ENCODE measurements at regions of chr1 and their contacts with region 1.

Region 1: DNA sequence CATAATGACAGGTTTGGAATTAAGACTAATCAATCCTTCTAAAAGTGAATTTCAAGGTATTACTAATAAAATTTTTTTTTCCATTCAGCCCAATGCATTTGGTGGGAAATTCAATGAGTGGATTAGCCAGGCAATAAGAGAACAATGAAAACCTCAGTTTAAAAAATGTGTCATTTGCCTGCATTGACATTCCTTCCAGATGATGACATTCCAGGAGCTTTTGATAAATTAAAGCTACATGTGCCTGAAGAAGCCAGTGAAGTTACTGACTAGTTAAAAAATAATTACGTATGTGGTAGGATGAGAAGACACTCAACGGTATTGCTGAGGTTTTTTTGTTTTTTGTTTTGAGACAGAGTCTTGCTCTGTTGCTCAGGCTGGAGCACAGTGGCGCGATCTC is 37.9 kb upstream of the RC3H1 start:
- DNase-seq: no peak
- ATAC-seq: no peak
- H3K4me3 ChIP-seq: no peak overlapping the region
- H3K4me3 Mint-ChIP-seq: no peak overlapping the region
- H3K27ac ChIP-seq: no peak overlapping the region
- H3K27ac Mint-ChIP-seq: no peak overlapping the region
- H3K4me1 ChIP-seq: no peaks in the 10 kb centered on the region
- H3K4me1 Mint-ChIP-seq: peaks cover 2 to 12% (median 5%) of the 10 kb centered on the region in 3 donors
- H3K27me3 ChIP-seq: peaks cover 0 to 5% of the 10 kb centered on the region in 2 experiments
- H3K27me3 Mint-ChIP-seq: peaks cover 2 to 7% of the 10 kb centered on the region in 2 donors

Region 2: DNA sequence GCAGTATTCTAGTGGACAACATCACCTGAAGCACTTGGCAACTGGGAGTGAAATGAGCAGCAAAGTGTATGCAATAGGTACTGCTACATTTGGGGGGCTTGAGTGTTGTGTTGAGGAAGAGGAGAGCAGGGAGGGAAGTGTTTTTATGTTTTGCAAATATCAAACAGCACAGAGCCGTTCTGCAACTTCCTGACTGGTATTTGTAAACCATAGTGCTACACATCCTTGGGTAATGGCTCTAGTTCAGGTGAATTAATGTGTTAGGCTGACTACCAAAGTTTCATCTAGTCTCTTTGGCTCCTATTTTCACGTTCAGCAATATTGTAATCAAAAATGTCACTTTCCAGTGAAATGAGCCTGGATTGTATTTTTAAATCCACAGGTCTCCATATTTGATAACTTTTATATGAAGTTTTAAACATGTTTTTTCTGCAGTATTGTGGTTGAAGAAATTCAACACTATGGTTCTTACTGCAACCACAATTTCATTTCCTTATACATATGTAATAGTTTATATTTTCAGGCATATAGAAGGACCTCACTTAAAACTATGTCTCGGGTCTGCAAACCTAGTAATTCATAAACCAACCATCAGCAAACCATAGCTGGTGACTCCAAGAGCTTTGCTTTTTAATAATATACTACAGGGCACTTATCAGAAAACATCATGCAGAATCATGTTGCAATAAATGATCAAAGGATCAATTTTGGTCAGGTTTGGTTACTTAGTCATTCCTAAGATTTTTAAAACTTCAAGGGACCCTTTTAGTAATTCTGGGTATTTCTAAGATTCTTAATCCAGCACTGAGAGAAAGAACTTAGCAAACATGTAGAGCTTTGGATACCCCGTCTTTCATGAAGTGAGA is 173.1 kb before region 1 on chr1:
- CTCF ChIA-PET with region 1: no interaction called
- POLR2A ChIA-PET with region 1: no interaction called
- DNase-seq: peak in 1 of 35 experiments; percentile 7
- ATAC-seq: peak in 2 of 4 experiments; percentile 32 to 38
- H3K4me3 ChIP-seq: no peak overlapping the region
- H3K4me3 Mint-ChIP-seq: no peak overlapping the region
- H3K27ac ChIP-seq: peak overlapping the region; percentile 5
- H3K27ac Mint-ChIP-seq: peak overlapping the region; percentile 29 to 48
- H3K4me1 ChIP-seq: peaks cover 9 to 13% of the 10 kb centered on the region in 2 experiments
- H3K4me1 Mint-ChIP-seq: peaks cover 30 to 44% (median 42%) of the 10 kb centered on the region in 3 donors
- H3K27me3 ChIP-seq: no peaks in the 10 kb centered on the region
- H3K27me3 Mint-ChIP-seq: no peaks in the 10 kb centered on the region

Region 3: GRCh38 chr1:174074757-174075156 is 14.7 kb after region 1 on chr1:
- CTCF ChIA-PET with region 1: no interaction called
- POLR2A ChIA-PET with region 1: no interaction called
- DNase-seq: peak in 1 of 35 experiments; percentile 16
- ATAC-seq: no peak
- H3K4me3 ChIP-seq: no peak overlapping the region
- H3K4me3 Mint-ChIP-seq: no peak overlapping the region
- H3K27ac ChIP-seq: no peak overlapping the region
- H3K27ac Mint-ChIP-seq: no peak overlapping the region
- H3K4me1 ChIP-seq: no peaks in the 10 kb centered on the region
- H3K4me1 Mint-ChIP-seq: no peaks in the 10 kb centered on the region
- H3K27me3 ChIP-seq: no peaks in the 10 kb centered on the region
- H3K27me3 Mint-ChIP-seq: peaks cover 3 to 5% of the 10 kb centered on the region in 2 donors

Region 4: DNA sequence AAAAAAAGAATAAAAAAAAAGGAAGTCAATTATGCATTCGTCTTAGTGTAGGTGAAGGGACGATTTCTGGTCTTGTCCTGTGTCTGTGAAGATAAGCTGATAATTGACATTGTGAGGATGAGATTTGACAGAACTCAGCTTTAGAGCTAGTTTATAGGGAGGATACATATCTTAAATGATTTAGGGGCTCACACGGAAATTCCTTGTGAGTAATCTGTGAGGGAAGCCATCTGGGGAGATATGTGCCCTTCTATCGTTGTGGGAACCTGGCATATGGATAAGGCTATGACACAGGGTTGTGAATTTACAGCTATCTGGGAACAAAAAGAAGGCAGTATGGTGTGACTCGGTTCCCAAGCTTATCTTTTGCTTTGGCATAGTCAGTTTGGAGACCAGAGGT is 170.3 kb after region 1 on chr1:
- CTCF ChIA-PET with region 1: no interaction called
- POLR2A ChIA-PET with region 1: no interaction called
- DNase-seq: no peak
- ATAC-seq: no peak
- H3K4me3 ChIP-seq: no peak overlapping the region
- H3K4me3 Mint-ChIP-seq: no peak overlapping the region
- H3K27ac ChIP-seq: no peak overlapping the region
- H3K27ac Mint-ChIP-seq: no peak overlapping the region
- H3K4me1 ChIP-seq: no peaks in the 10 kb centered on the region
- H3K4me1 Mint-ChIP-seq: peaks cover 0 to 8% (median 8%) of the 10 kb centered on the region in 3 donors
- H3K27me3 ChIP-seq: no peaks in the 10 kb centered on the region
- H3K27me3 Mint-ChIP-seq: no peaks in the 10 kb centered on the region

Region 5: GRCh38 chr1:174376030-174376429 is 315.9 kb after region 1 on chr1:
- CTCF ChIA-PET with region 1: no interaction called
- POLR2A ChIA-PET with region 1: no interaction called
- DNase-seq: no peak
- ATAC-seq: no peak
- H3K4me3 ChIP-seq: no peak overlapping the region
- H3K4me3 Mint-ChIP-seq: no peak overlapping the region
- H3K27ac ChIP-seq: no peak overlapping the region
- H3K27ac Mint-ChIP-seq: no peak overlapping the region
- H3K4me1 ChIP-seq: no peaks in the 10 kb centered on the region
- H3K4me1 Mint-ChIP-seq: peaks cover 0 to 7% (median 0%) of the 10 kb centered on the region in 3 donors
- H3K27me3 ChIP-seq: no peaks in the 10 kb centered on the region
- H3K27me3 Mint-ChIP-seq: no peaks in the 10 kb centered on the region

Region 6: DNA sequence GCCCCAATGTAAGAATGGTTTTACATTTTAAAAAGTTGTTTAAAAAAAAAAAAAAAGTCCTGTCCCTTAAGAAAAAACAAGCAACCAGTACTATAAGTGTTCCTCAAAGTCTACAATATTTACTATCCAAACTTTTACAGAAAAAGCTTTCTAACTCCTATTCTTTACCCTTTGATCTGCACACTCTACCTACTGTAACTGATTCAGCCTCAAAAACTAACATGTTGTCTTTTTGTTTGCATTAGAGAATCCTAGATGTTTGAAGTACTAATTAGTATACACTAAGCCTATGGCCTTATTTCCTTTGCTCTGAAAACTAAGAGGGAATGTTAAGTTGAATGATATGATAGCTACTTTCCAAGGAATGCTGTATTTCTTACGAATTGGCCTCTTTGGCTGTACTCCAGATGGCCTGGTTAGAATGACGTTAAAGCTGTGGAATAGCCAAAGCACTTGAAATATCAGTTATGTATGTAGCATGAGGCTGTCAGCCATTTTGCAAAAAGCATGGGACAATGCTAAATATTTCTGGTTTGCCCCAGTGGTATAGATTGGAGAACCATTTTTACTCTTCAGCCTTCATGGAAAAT is 622.4 kb after region 1 on chr1:
- CTCF ChIA-PET with region 1: no interaction called
- POLR2A ChIA-PET with region 1: interaction called in 1 of 2 experiments, 10 read pairs
- DNase-seq: no peak
- ATAC-seq: no peak
- H3K4me3 ChIP-seq: no peak overlapping the region
- H3K4me3 Mint-ChIP-seq: no peak overlapping the region
- H3K27ac ChIP-seq: no peak overlapping the region
- H3K27ac Mint-ChIP-seq: no peak overlapping the region
- H3K4me1 ChIP-seq: no peaks in the 10 kb centered on the region
- H3K4me1 Mint-ChIP-seq: peaks cover 0 to 3% (median 3%) of the 10 kb centered on the region in 3 donors
- H3K27me3 ChIP-seq: no peaks in the 10 kb centered on the region
- H3K27me3 Mint-ChIP-seq: no peaks in the 10 kb centered on the region

Measured in T-cell (primary cell).